Activated naive CD4-positive, alpha-beta T cell treated with anti-CD3 and anti-CD28 coated beads for 36 hours (primary cell): ENCODE measurements at regions of chr3 and their contacts with region 1.

Region 1: GRCh38 chr3:4978204-4978965 is 852 bp upstream of the BHLHE40 start:
- DNase-seq: peak; percentile 62
- H3K4me3 Mint-ChIP-seq: peak overlapping the region; percentile 96
- H3K27ac Mint-ChIP-seq: peak overlapping the region; percentile 98
- H3K4me1 Mint-ChIP-seq: peaks cover 53% of the 10 kb centered on the region
- H3K27me3 Mint-ChIP-seq: no peaks in the 10 kb centered on the region

Region 2: GRCh38 chr3:4493014-4493940 is 485.1 kb before region 1 on chr3 and contains the start of gene ITPR1:
- CTCF ChIA-PET with region 1: no interaction called
- intact Hi-C with region 1: loop called (anchors 1 kb)
- DNase-seq: peak; percentile 98
- H3K4me3 Mint-ChIP-seq: peak within 1 kb of the TSS; percentile 87
- H3K27ac Mint-ChIP-seq: peak within 1 kb of the TSS; percentile 83
- H3K4me1 Mint-ChIP-seq: peaks cover 37% of the 10 kb centered on the region
- H3K27me3 Mint-ChIP-seq: peaks cover 4% of the 10 kb centered on the region
- total RNA-seq, gene ITPR1: 38.5 to 41.1 TPM

Region 3: GRCh38 chr3:4776980-4777581 is 201.3 kb before region 1 on chr3:
- CTCF ChIA-PET with region 1: interaction called, 8 read pairs
- intact Hi-C with region 1: loop called (anchors 1 kb)
- DNase-seq: peak; percentile 42
- H3K4me3 Mint-ChIP-seq: peak overlapping the region; percentile 33
- H3K27ac Mint-ChIP-seq: peak overlapping the region; percentile 89
- H3K4me1 Mint-ChIP-seq: peaks cover 34% of the 10 kb centered on the region
- H3K27me3 Mint-ChIP-seq: no peaks in the 10 kb centered on the region

Region 4: GRCh38 chr3:4845882-4846281 is 132.5 kb before region 1 on chr3:
- CTCF ChIA-PET with region 1: interaction called, 27 read pairs
- intact Hi-C with region 1: loop called (anchors 1 kb)
- DNase-seq: no peak
- H3K4me3 Mint-ChIP-seq: no peak overlapping the region
- H3K27ac Mint-ChIP-seq: peak overlapping the region; percentile 93
- H3K4me1 Mint-ChIP-seq: peaks cover 94% of the 10 kb centered on the region
- H3K27me3 Mint-ChIP-seq: no peaks in the 10 kb centered on the region

Region 5: GRCh38 chr3:4994823-4995499 is 16.6 kb after region 1 on chr3:
- CTCF ChIA-PET with region 1: interaction called, 14 read pairs
- intact Hi-C with region 1: no loop called
- DNase-seq: peak; percentile 6
- H3K4me3 Mint-ChIP-seq: no peak overlapping the region
- H3K27ac Mint-ChIP-seq: no peak overlapping the region
- H3K4me1 Mint-ChIP-seq: peaks cover 16% of the 10 kb centered on the region
- H3K27me3 Mint-ChIP-seq: no peaks in the 10 kb centered on the region

Region 6: DNA sequence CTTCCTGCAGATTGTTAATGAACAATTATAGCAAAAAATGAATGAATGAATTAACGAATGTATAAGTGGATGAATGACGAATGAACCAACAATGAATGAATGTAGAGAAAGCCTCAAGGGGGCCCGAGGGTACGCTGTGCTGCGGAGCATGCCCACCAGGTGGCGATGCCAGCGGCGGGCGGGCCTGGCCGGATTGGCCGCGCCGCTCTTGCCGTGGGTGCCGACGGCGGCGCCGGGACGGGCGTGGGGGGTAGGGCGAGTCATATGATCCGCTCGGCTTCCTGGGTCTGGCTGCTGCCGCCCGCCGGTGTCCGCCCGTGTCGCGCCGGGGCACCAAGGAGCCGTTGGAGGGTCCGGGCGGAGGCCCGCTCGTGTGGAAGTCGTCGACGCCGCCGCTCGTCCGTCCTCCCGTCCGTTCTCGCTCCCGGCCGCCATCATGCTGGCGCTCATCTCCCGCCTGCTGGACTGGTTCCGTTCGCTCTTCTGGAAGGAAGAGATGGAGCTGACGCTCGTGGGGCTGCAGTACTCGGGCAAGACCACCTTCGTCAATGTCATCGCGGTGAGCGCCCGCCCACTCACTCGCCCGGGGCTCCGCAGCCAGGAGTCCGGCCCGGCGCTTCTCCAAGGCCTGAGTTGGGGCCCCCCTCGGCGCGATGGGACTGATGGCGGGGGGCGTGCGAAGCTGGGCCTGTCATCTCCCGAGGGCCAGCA is 143.8 kb after region 1 on chr3 and contains the start of gene ARL8B:
- CTCF ChIA-PET with region 1: no interaction called
- intact Hi-C with region 1: loop called (anchors 1 kb)
- DNase-seq: peak; percentile 94
- H3K4me3 Mint-ChIP-seq: peak within 1 kb of the TSS; percentile 90
- H3K27ac Mint-ChIP-seq: peak within 1 kb of the TSS; percentile 90
- H3K4me1 Mint-ChIP-seq: peaks cover 39% of the 10 kb centered on the region
- H3K27me3 Mint-ChIP-seq: no peaks in the 10 kb centered on the region
- total RNA-seq, gene ARL8B: 38.4 to 39.3 TPM